BJ (cell line): ENCODE measurements at regions of chr19 and their contacts with region 1.

Region 1: GRCh38 chr19:42254989-42255765 is at the start of gene ERF:
- DNase-seq: peak; percentile 38
- H3K4me3 ChIP-seq: peak within 1 kb of the TSS; percentile 100
- H3K27me3 ChIP-seq: no peaks in the 10 kb centered on the region
- CTCF ChIP-seq: no peak
- polyA plus RNA-seq, gene ERF: 47.4 and 51.4 TPM in 2 replicates

Region 2: DNA sequence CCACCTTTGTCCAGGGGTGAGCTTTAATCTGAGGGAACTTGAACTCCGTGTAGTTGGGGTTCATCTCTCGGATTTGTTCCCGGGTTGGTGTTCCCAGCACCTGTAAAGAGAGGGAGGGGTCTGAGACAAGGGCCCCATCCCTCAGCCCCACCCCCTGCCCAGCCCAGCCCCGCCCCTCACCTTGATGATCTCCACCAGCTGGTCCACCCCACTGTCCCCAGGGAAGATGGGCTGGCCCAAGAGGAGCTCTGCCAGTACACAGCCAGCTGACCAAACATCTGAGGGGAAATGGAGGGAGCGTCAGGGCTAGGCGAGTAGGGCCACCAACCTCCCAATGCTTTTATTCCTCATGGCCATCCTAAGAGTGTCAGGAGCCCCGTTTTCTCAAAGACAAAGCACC is 22.1 kb before region 1 on chr19:
- CTCF ChIA-PET with region 1: no interaction called
- POLR2A ChIA-PET with region 1: no interaction called
- DNase-seq: no peak
- H3K4me3 ChIP-seq: no peak overlapping the region
- H3K27me3 ChIP-seq: no peaks in the 10 kb centered on the region
- CTCF ChIP-seq: no peak

Region 3: GRCh38 chr19:42316223-42317211 is 61.3 kb after region 1 on chr19:
- CTCF ChIA-PET with region 1: no interaction called
- POLR2A ChIA-PET with region 1: interaction called, 13 read pairs
- DNase-seq: no peak
- H3K4me3 ChIP-seq: no peak overlapping the region
- H3K27me3 ChIP-seq: peaks cover 11% of the 10 kb centered on the region
- CTCF ChIP-seq: no peak